Activated naive CD4-positive, alpha-beta T cell treated with anti-CD3 and anti-CD28 coated beads for 36 hours (primary cell): ENCODE measurements at regions of chr6 and their contacts with region 1.

Region 1: DNA sequence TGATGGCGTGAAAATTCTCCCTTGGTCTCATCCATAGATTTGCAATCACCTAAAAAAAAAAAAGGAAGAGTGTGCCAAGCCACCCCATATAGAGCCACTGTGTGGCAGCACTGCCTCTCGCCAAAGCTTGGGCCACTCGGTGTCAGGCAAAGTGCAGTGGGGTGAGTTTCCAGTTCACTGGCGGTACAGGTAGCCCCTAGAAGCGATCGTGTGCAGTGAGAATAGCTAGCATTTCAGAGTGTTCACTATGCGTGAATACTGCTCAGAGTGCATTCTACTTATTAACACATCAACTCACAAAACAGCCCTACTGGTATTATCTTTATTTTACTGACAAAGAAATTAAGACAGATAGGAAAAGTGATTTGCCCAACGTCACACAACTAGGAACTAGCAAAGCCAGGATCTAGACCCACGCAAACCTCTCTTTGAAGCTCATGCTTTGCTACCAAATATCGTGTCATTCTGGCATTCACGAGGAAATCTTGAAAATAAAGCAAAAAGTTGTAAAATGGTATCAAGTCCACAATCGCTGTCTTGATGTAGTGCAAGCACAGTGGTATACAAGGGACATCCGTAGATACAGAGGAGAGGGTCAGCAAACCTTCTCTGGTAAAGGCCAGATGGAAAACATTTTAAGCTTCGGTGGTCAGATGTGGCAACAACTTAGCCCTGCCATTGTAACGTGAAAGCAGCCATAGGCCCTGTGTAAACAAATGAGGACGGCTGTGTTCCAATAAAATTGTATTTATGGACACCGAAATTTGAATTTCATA is 10.4 kb upstream of the GCNT2 start:
- DNase-seq: peak; percentile 70
- H3K4me3 Mint-ChIP-seq: no peak overlapping the region
- H3K27ac Mint-ChIP-seq: no peak overlapping the region
- H3K4me1 Mint-ChIP-seq: no peaks in the 10 kb centered on the region
- H3K27me3 Mint-ChIP-seq: peaks cover 5% of the 10 kb centered on the region

Region 2: GRCh38 chr6:10136636-10137035 is 374.1 kb before region 1 on chr6:
- CTCF ChIA-PET with region 1: no interaction called
- intact Hi-C with region 1: no loop called
- DNase-seq: no peak
- H3K4me3 Mint-ChIP-seq: no peak overlapping the region
- H3K27ac Mint-ChIP-seq: no peak overlapping the region
- H3K4me1 Mint-ChIP-seq: no peaks in the 10 kb centered on the region
- H3K27me3 Mint-ChIP-seq: no peaks in the 10 kb centered on the region

Region 3: DNA sequence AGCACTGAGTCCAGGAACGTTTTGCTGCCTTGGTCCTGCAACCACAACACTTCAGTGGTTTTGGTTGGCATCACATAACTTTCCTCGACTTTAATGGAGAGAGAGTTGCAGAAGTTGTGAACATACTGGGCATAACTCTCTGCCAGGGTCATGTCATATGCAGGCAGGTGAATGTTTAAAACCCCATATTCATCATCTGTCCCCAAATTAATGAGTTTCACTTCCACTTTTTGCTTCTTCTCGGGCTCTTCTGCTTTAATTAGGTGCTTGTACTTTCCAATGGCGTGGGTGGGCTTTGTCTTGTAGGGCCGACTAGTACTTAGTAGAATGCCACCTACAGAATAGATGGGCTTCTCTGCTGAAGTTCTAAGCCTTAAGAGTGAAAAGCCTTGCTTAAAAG is 50.7 kb before region 1 on chr6:
- CTCF ChIA-PET with region 1: no interaction called
- intact Hi-C with region 1: no loop called
- DNase-seq: no peak
- H3K4me3 Mint-ChIP-seq: no peak overlapping the region
- H3K27ac Mint-ChIP-seq: no peak overlapping the region
- H3K4me1 Mint-ChIP-seq: no peaks in the 10 kb centered on the region
- H3K27me3 Mint-ChIP-seq: peaks cover 18% of the 10 kb centered on the region

Region 4: DNA sequence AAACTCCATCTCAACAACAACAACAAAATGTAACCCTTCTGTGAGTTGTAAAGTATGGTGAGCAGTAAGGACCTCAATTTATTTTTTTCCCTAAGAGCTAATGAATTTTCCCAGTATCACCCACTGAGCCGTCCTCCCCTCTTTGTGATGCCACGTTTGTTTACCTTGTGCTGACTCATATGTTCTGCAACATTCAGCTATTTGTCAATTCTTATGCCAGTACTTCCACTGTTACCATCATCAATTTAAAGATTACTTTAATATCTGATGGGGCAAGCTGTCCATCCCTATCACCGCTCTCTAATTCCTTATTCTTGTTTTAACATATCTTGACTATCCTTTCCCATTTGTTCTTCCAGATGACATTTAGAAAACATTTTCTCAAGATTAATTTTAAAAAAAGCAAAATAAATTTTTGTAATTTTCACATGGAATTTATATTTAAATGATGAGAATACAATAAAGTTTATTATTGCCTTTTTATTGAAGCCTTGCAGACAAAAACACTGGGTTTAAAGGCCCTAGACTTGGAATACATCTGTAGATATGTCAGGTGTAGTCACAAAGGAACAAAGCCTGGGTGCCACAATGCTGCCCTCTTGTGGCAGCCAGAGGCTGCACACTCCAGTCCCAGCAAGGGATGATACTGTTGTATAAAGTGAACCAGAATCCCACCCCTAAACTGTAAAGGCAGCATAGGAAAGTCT is 290.2 kb after region 1 on chr6:
- CTCF ChIA-PET with region 1: interaction called, 28 read pairs
- intact Hi-C with region 1: loop called (anchors 1 kb)
- DNase-seq: peak; percentile 75
- H3K4me3 Mint-ChIP-seq: no peak overlapping the region
- H3K27ac Mint-ChIP-seq: no peak overlapping the region
- H3K4me1 Mint-ChIP-seq: no peaks in the 10 kb centered on the region
- H3K27me3 Mint-ChIP-seq: no peaks in the 10 kb centered on the region

Region 5: DNA sequence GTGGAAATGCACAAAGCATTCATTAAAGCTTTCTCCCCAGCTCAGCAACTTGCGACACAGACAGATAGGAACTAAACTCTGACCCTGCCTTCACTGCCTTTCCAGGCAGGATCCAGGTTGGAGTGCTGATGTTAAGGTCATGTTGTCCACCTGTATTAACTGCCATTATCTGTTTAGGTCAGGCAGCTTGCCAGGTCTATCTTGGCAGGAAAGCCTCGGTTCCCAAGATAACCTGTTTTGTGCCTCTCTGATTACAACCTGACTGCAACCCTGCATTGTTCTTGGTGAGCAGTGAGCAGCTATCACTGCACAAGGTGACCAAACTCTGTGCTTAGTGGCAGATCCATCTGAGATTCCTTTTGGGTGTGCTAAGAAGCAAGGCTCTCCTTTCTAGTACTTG is 556.6 kb after region 1 on chr6:
- CTCF ChIA-PET with region 1: no interaction called
- intact Hi-C with region 1: loop called (anchors 1 kb)
- DNase-seq: no peak
- H3K4me3 Mint-ChIP-seq: no peak overlapping the region
- H3K27ac Mint-ChIP-seq: no peak overlapping the region
- H3K4me1 Mint-ChIP-seq: no peaks in the 10 kb centered on the region
- H3K27me3 Mint-ChIP-seq: peaks cover 3% of the 10 kb centered on the region